Common myeloid progenitor, CD34-positive (primary cell): ENCODE measurements at regions of chr1 and their contacts with region 1.

Region 1: GRCh38 chr1:26697978-26698849 is 2.4 kb downstream of the ARID1A start:
- DNase-seq: peak; percentile 69 to 93 (median 91)
- H3K4me3 ChIP-seq: peak overlapping the region; percentile 58 to 88 (median 83)
- H3K27ac ChIP-seq: peak overlapping the region; percentile 41 to 94
- H3K4me1 ChIP-seq: peaks cover 64 to 74% (median 70%) of the 10 kb centered on the region in 4 experiments
- H3K27me3 ChIP-seq: no peaks in the 10 kb centered on the region

Region 2: DNA sequence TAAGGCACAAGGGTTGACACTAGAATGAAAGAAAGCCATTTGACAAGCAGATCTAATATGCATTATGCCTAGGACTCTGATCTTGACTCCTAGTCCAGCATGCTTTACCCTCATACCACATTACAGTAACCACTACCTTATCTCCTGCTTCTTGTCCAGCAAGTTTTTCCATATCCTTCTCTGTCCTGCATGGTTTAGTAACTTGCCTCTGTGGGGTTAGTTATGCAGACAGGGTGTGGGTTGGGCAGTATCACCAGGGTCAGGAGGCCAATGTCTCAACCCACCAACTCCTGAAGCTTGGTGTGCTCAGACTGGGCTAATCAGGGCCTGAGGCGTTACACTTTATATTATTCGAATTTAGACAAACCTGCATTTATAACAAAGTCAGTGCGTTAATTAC is 247.3 kb before region 1 on chr1:
- CTCF ChIA-PET with region 1: no interaction called
- POLR2A ChIA-PET with region 1: no interaction called
- DNase-seq: no peak
- H3K4me3 ChIP-seq: no peak overlapping the region
- H3K27ac ChIP-seq: no peak overlapping the region
- H3K4me1 ChIP-seq: no peaks in the 10 kb centered on the region
- H3K27me3 ChIP-seq: no peaks in the 10 kb centered on the region

Region 3: GRCh38 chr1:26666855-26667254 is 31.4 kb before region 1 on chr1:
- CTCF ChIA-PET with region 1: no interaction called
- POLR2A ChIA-PET with region 1: no interaction called
- DNase-seq: no peak
- H3K4me3 ChIP-seq: no peak overlapping the region
- H3K27ac ChIP-seq: no peak overlapping the region
- H3K4me1 ChIP-seq: no peaks in the 10 kb centered on the region
- H3K27me3 ChIP-seq: no peaks in the 10 kb centered on the region

Region 4: DNA sequence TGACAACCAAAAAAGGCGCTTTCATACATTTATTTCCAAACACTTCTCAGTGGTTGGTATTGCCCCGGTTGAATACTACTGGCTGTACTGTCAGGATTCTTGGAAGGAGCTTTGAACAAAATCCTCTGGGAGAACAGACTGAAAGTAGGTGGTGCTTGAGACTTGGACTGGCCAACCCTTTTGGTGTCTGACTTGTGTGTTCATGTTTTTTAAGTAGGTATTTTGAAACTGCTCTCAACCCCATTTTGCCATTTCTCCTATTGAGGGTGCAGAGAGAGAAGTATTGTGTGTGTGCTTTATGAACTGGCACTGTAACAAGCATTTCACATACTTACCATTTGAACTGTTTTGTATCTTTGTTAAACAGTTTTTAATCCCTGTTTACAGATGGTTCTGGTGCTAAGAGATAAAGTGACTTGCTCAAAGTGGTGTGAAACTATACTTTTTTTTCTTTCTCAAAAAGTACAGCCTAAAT is 18.8 kb after region 1 on chr1:
- CTCF ChIA-PET with region 1: interaction called, 11 read pairs
- POLR2A ChIA-PET with region 1: interaction called, 3 read pairs
- DNase-seq: peak; percentile 55 to 83 (median 71)
- H3K4me3 ChIP-seq: no peak overlapping the region
- H3K27ac ChIP-seq: peak overlapping the region in 1 of 2 experiments; percentile 58
- H3K4me1 ChIP-seq: peaks cover 5 to 57% (median 26%) of the 10 kb centered on the region in 4 experiments
- H3K27me3 ChIP-seq: no peaks in the 10 kb centered on the region